ENCODE measurements at regions of chr1 and their contacts with region 1.

Region 1: DNA sequence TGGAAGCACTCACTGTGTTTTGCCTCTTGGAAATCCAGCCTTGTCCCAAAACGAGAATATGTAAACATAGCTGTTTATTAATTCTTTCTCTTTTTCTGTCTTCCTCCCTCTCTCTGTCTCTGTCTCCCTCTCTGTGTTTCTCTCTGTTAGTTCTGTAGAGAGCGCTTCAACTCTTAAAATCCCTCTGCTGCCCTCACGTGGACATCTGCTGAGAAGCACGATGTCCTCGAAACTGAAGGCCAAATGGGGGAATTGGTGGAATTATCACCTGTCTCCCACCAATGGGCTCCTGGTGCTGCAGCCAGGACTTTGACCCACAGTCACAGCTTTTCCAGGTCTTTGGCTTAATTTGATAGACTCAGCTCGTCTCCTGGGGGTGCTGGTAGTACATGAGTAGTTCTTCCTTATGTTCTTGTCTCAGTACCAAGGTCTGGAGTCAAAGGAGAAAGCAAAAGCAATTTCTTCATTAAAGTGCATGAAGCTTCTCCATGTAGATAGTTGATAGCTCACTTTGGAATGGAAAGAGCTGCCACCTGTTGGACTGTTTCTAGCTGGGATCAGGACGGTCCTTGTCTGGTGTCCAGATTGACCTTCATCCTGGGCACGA is 5.5 kb upstream of the GBP6 start:
- DNase-seq: peak; percentile 76 to 90
- ATAC-seq: peak; percentile 91 to 99 (median 99)
- H3K4me3 ChIP-seq: no peak overlapping the region
- H3K4me3 Mint-ChIP-seq: peak overlapping the region; percentile 0
- H3K27ac ChIP-seq: no peak overlapping the region
- H3K27ac Mint-ChIP-seq: peak overlapping the region; percentile 2 to 60
- H3K4me1 ChIP-seq: peaks cover 5% of the 10 kb centered on the region
- H3K4me1 Mint-ChIP-seq: peaks cover 13 to 17% of the 10 kb centered on the region in 2 donors
- H3K27me3 ChIP-seq: no peaks in the 10 kb centered on the region
- H3K27me3 Mint-ChIP-seq: peaks cover 0 to 10% of the 10 kb centered on the region in 2 donors
- CTCF ChIP-seq: peak; percentile 87

Region 2: DNA sequence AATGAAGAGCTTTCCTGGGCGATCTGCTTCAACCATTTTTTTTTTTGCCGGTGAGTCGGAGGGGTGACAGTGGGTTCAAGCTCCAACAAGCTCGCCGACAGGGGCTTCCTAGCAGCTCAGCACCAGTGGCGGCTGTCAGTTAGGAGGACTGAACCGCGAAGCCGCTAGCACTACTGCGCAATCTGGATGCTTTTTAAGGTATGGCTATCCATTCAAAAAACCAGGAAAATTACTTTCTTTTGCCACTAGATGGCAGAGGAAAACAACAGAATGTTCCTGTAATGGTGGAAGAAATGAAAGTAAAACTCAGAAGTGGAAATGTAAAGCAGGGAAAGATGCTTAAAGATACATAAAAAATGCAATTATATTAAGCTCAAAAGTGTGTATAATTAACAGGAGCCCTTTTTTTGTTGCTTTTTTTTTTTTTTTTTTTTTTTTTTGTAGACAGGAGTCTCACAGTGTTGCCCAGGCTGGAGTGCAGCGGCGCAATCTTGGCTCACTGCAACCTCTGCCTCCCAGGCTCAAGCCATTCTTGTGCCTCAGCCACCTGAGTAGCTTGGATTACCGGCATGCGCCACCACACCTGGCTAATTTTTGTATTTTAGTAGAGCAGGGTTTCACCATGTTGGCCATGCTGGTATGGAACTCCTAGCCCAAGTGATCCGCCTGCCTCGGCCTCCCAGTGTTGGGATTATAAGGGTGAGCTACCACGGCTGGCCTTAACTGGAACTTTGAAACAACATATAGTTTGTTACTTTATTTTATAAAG is 374.4 kb before region 1 on chr1:
- intact Hi-C with region 1: loop called (anchors 5 kb)
- DNase-seq: peak in 1 of 2 donors; percentile 81
- ATAC-seq: peak; percentile 70 to 86 (median 84)
- H3K4me3 ChIP-seq: no peak overlapping the region
- H3K4me3 Mint-ChIP-seq: peak overlapping the region; percentile 26
- H3K27ac ChIP-seq: peak overlapping the region; percentile 22
- H3K27ac Mint-ChIP-seq: peak overlapping the region; percentile 69 to 87
- H3K4me1 ChIP-seq: peaks cover 8% of the 10 kb centered on the region
- H3K4me1 Mint-ChIP-seq: peaks cover 44 to 64% of the 10 kb centered on the region in 2 donors
- H3K27me3 ChIP-seq: no peaks in the 10 kb centered on the region
- H3K27me3 Mint-ChIP-seq: no peaks in the 10 kb centered on the region
- CTCF ChIP-seq: peak; percentile 67

Region 3: DNA sequence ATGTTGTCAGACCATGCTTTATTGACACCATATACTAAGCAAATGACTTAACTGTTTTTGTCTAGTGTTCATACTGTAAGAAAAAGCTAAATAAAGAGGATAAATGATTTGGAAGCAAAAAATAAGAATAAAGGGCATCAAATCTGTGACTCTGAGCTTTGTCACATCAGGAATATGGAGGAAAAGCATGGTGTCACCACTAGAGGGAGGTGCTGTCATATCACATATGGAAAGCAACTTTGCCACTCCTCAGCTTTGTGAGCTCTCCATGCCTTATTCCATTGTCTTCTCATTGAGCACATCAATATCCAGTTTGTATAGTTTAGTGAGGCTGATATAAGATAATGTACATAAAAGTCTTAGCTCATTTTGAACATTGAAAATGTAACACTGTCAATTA is 272.6 kb before region 1 on chr1:
- intact Hi-C with region 1: loop called (anchors 1 kb)
- DNase-seq: peak in 1 of 2 donors; percentile 77
- ATAC-seq: peak in 2 of 3 donors; percentile 72 to 79
- H3K4me3 ChIP-seq: no peak overlapping the region
- H3K4me3 Mint-ChIP-seq: no peak overlapping the region
- H3K27ac ChIP-seq: no peak overlapping the region
- H3K27ac Mint-ChIP-seq: no peak overlapping the region
- H3K4me1 ChIP-seq: no peaks in the 10 kb centered on the region
- H3K4me1 Mint-ChIP-seq: no peaks in the 10 kb centered on the region
- H3K27me3 ChIP-seq: no peaks in the 10 kb centered on the region
- H3K27me3 Mint-ChIP-seq: peaks cover 0 to 3% of the 10 kb centered on the region in 2 donors
- CTCF ChIP-seq: peak; percentile 69

Region 4: GRCh38 chr1:89198491-89199072 is 159.8 kb before region 1 on chr1 and contains the start of gene GBP4:
- intact Hi-C with region 1: loop called (anchors 1 kb)
- DNase-seq: peak; percentile 40 to 80
- ATAC-seq: peak; percentile 70 to 80 (median 72)
- H3K4me3 ChIP-seq: peak within 1 kb of the TSS; percentile 81
- H3K4me3 Mint-ChIP-seq: peak within 1 kb of the TSS; percentile 89
- H3K27ac ChIP-seq: peak within 1 kb of the TSS; percentile 88
- H3K27ac Mint-ChIP-seq: peak within 1 kb of the TSS; percentile 91 to 99
- H3K4me1 ChIP-seq: peaks cover 23% of the 10 kb centered on the region
- H3K4me1 Mint-ChIP-seq: peaks cover 67 to 93% of the 10 kb centered on the region in 2 donors
- H3K27me3 ChIP-seq: no peaks in the 10 kb centered on the region
- H3K27me3 Mint-ChIP-seq: no peaks in the 10 kb centered on the region
- CTCF ChIP-seq: no peak
- total RNA-seq, gene GBP4: 39.1 to 62.1 (median 45.6) TPM

Region 5: DNA sequence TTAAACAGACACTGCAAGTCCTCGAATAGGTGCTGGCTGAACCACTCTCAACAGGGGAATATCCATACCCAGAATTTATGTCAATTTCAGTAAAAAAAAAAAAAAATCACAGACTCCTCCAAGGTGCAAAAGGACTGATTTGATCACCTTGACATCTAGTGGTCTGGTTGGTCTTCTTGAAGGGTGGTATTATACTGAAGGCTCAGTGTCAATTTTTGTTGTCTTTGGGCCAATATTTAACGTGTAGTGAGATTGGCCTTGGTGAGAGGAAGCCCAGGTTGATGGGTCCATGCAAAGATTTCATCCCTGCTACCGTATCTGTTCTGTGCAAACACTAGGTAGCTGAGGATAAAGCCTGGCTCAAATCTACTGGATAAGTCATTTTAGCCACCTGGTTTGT is 81.7 kb before region 1 on chr1:
- intact Hi-C with region 1: loop called (anchors 1 kb)
- DNase-seq: peak in 1 of 2 donors; percentile 70
- ATAC-seq: no peak
- H3K4me3 ChIP-seq: no peak overlapping the region
- H3K4me3 Mint-ChIP-seq: no peak overlapping the region
- H3K27ac ChIP-seq: no peak overlapping the region
- H3K27ac Mint-ChIP-seq: peak overlapping the region; percentile 56 to 98
- H3K4me1 ChIP-seq: peaks cover 41% of the 10 kb centered on the region
- H3K4me1 Mint-ChIP-seq: peaks cover 72 to 76% of the 10 kb centered on the region in 2 donors
- H3K27me3 ChIP-seq: no peaks in the 10 kb centered on the region
- H3K27me3 Mint-ChIP-seq: no peaks in the 10 kb centered on the region
- CTCF ChIP-seq: no peak

Region 6: DNA sequence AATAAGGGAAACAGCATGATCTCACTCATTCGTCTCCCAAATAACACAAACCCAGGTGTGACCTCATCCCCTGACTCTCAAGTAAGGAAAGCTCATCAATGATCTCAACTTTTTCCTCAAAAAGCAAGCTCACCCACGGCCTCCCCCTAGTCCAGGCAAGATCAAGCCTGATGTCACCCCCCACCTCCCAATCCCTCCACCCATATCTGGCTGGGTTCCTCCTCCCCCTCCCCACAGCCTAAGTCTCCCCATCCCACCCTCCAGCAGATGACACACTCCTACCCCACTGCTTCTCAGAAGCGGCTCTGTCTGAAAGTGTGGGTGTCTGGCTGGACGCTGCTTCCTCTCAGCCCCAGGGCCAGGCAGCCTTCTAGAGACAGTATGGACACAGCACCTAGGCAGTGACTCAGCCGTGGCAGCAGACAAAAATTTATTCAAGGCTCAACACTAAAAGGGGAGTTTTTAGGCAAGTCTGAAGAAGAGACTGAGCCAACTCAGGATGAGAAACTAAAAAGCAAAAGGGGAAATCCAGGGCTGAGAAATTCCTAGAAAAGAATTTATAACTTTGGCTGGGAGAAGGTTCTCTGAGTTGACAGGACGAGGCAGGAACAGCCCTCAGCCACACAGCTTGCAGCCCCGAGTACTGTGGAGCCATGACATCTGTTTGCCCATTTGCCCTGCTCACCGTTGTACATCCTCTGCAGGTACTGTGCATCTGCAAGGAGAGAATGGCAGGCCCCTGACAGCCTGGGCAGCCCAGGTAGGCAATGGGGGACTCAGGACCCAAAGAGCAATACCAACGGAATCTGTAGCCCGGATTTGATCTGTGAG is 380.8 kb after region 1 on chr1:
- intact Hi-C with region 1: no loop called
- DNase-seq: peak in 1 of 2 donors; percentile 48
- ATAC-seq: peak; percentile 64 to 86 (median 74)
- H3K4me3 ChIP-seq: no peak overlapping the region
- H3K4me3 Mint-ChIP-seq: peak overlapping the region; percentile 43
- H3K27ac ChIP-seq: peak overlapping the region; percentile 40
- H3K27ac Mint-ChIP-seq: peak overlapping the region; percentile 75 to 83
- H3K4me1 ChIP-seq: peaks cover 16% of the 10 kb centered on the region
- H3K4me1 Mint-ChIP-seq: peaks cover 34 to 43% of the 10 kb centered on the region in 2 donors
- H3K27me3 ChIP-seq: no peaks in the 10 kb centered on the region
- H3K27me3 Mint-ChIP-seq: no peaks in the 10 kb centered on the region
- CTCF ChIP-seq: no peak